Spleen (tissue), 13 donors: ENCODE measurements at regions of chr21 and their contacts with region 1.

Region 1: DNA sequence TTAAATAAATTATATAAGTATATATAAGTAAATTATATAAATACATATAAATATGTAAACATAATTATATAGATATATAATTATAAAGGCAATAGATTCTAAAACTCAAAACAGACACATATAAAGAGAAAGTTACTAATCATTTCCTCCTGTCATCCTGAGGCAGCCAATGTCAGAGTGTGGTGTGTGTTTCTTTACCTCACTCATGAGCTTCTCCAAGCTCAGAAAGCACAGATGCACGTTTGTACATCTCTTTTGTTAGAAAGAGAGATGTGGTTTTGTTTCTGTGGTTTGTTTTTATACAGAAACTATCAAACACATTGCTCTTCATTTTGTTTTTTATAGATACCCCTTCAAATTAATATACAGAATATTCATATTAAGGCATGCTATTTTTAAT is 594.8 kb downstream of the USP25 start:
- DNase-seq: no peak
- H3K4me3 ChIP-seq: no peak overlapping the region
- H3K27ac ChIP-seq: no peak overlapping the region
- H3K4me1 ChIP-seq: no peaks in the 10 kb centered on the region
- H3K27me3 ChIP-seq: no peaks in the 10 kb centered on the region
- CTCF ChIP-seq: no peak
- POLR2A ChIP-seq: no peak

Region 2: DNA sequence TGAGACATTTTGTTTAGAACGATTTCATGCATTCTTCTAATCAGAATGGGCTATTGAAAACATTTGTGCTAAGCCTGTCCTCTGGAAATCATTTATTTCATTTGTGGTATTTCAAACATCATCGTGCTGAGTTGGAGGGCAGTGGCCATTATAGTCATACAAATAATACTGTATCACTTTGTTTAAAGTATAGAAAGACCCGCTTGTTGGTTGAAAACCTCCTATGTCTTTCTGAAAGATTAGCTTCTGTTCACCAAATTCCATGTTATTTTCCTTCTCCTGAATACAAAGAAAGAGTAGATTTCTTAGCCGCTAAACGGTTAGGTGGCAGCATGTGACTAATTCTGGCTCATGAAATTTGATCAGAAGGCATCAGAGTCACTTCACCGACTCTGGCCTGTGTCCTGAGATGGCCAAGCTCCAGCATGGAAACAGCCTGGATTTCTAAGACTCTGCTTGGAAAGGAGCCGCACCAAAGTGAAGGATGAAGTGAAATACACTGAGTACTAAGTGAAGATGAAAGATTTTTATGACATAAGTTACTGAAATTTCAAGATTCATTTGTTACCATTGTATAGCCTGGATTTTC is 239.8 kb before region 1 on chr21:
- intact Hi-C with region 1: loop called (anchors 5 kb)
- DNase-seq: no peak
- H3K4me3 ChIP-seq: no peak overlapping the region
- H3K27ac ChIP-seq: no peak overlapping the region
- H3K4me1 ChIP-seq: no peaks in the 10 kb centered on the region
- H3K27me3 ChIP-seq: no peaks in the 10 kb centered on the region
- CTCF ChIP-seq: no peak
- POLR2A ChIP-seq: no peak